BJ (cell line): ENCODE measurements at regions of chr3 and their contacts with region 1.

Region 1: DNA sequence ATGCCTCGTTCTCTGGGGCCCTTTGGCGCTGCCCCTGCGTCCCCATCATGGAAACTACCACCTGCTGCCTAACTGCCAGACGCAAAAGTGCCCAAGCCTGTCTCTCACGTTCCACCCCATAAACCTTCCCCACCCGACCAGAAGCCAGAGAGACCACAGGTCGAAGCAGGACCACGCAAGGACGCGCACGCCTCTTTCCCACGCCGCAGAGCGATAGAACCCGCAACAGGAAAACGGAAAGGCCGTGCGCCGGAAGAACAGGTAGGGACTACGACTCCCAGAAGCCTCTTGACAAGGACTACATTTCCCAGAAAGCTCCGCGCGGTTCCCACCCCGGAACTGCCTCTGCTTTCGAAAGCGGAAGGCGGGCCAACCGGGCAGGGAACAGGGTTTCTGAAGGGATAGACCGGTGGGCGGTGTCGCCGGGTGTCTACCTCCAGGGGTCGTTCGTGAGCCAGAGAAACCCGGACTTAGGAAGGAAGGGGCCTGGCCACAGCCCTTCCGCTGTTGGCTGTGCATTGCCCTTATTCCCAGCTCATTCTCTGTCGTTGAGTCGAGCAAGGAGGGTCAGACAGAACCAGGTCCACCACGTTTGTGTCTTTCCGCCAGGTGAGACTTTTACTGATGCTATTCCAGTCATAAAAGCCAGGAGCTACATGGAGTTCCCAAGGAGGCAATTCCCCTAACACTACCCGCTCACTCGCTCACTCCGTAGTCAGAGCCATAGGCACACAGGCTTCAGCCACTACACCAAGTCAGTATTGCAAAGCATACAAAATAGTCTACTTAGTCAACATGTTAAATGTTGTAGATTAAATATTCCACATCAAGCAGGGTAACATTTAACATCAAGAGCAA is 56.6 kb upstream of the ZBTB38 start:
- DNase-seq: peak; percentile 87
- H3K4me3 ChIP-seq: peak overlapping the region; percentile 64
- H3K27me3 ChIP-seq: no peaks in the 10 kb centered on the region
- CTCF ChIP-seq: peak; percentile 86

Region 2: GRCh38 chr3:141094790-141095545 is 216.8 kb before region 1 on chr3:
- CTCF ChIA-PET with region 1: no interaction called
- POLR2A ChIA-PET with region 1: no interaction called
- DNase-seq: no peak
- H3K4me3 ChIP-seq: no peak overlapping the region; the same call in 1 of the 2 replicates
- H3K27me3 ChIP-seq: peaks cover 8% of the 10 kb centered on the region
- CTCF ChIP-seq: no peak

Region 3: GRCh38 chr3:141407047-141407446 is 95.3 kb after region 1 on chr3:
- CTCF ChIA-PET with region 1: interaction called, 14 read pairs
- POLR2A ChIA-PET with region 1: no interaction called
- DNase-seq: peak; percentile 86
- H3K4me3 ChIP-seq: no peak overlapping the region
- H3K27me3 ChIP-seq: no peaks in the 10 kb centered on the region
- CTCF ChIP-seq: no peak

Region 4: GRCh38 chr3:141561426-141562034 is 249.8 kb after region 1 on chr3:
- CTCF ChIA-PET with region 1: interaction called, 11 read pairs
- POLR2A ChIA-PET with region 1: no interaction called
- DNase-seq: peak; percentile 33
- H3K4me3 ChIP-seq: no peak overlapping the region
- H3K27me3 ChIP-seq: no peaks in the 10 kb centered on the region
- CTCF ChIP-seq: peak; percentile 93

Region 5: DNA sequence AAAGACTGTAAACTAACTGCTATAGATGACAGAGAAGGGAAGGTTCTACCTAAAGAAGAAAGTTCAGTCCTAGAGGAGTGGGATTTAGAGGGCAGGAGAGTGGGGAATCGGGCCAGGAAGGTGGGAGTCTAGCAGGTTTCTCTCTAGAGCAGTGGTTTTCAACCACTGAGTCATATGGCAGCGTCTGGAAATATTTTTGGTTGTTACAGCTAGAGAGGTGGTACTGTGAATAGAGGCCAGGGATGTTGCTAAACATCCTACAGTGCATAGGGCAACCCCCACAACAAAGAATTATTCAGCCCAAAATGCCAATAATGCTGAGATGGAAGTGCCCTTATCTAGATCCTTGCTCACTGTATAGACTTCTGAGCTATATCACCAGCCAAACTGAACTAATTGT is 593.4 kb after region 1 on chr3:
- CTCF ChIA-PET with region 1: no interaction called
- POLR2A ChIA-PET with region 1: no interaction called
- DNase-seq: no peak
- H3K4me3 ChIP-seq: no peak overlapping the region
- H3K27me3 ChIP-seq: no peaks in the 10 kb centered on the region
- CTCF ChIP-seq: no peak